Panc1 (cell line): ENCODE measurements at regions of chr17 and their contacts with region 1.

Region 1: DNA sequence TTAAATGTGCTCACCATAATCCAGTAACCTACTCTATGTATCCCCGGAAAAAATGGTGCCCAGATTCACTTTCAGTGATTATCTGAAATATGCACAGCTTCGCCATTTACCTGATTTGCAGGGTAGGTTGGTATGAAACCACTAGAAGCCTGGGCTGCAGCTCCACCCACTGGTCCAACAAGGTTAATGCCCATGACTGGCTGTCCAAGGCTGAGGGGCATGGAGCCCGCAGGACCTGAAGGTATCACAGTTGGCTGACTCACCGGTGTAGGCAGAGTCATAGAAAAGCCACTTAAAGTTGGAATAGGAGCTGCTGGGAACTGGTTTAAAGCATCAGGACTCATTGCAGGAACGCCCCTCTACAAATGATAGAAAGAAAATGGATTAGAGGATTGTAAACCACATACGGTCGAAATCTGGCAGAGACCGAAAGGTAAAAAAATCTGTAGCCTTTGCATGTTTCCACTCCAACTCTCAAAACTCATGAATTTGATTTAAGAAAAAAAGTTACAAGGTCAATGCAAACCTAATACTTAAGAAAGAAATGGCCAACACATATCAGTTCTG is 38.6 kb downstream of the SYNRG start:
- DNase-seq: peak; percentile 4
- ATAC-seq: peak; percentile 81
- H3K4me3 ChIP-seq: no peak overlapping the region
- H3K27ac ChIP-seq: no peak overlapping the region
- H3K4me1 ChIP-seq: no peaks in the 10 kb centered on the region
- H3K27me3 ChIP-seq: no peaks in the 10 kb centered on the region
- CTCF ChIP-seq: peak; percentile 52

Region 2: DNA sequence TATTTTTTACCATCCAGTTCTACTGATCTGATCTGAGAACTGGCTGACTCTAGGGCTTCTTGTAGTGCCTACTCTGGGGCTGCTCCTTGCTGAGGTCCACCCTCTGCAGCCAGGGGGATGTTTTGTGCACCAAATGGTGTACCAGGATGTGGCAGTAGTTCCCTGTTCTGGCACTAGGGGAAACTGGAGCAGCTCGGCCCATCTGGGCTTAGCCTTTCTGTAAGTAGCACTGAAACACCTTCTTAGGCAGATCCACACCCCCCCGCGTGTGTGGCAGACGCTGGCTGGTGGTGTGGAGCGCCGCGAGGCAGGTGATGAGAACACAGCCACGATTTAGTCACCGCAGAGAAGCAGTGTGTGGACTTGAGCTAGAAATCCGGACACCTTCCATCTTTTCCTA is 63.9 kb before region 1 on chr17:
- CTCF ChIA-PET with region 1: no interaction called
- POLR2A ChIA-PET with region 1: no interaction called
- in situ Hi-C with region 1: no loop called
- intact Hi-C with region 1: loop called (anchors 10 kb)
- DNase-seq: no peak
- ATAC-seq: peak; percentile 90
- H3K4me3 ChIP-seq: no peak overlapping the region
- H3K27ac ChIP-seq: no peak overlapping the region
- H3K4me1 ChIP-seq: no peaks in the 10 kb centered on the region
- H3K27me3 ChIP-seq: no peaks in the 10 kb centered on the region
- CTCF ChIP-seq: peak; percentile 55

Region 3: DNA sequence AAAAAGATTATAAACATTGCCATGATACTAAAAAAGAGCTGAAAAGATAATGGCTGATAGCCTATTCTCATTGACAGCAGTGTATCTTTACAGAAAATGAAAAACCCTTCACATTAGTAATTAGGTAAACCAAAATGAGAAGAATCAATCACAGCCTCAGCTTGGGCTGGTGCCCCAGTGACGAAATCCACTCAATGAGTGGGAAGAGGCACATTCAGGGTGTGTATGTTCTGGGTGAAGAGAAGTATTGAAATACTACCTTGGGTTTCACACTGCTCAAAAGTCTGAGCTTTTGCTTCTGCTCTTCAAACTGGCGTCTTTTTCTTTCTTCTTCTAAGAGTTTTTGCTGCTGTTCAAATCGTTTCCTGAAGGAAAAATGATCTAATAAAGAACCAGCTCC is 14.5 kb after region 1 on chr17:
- CTCF ChIA-PET with region 1: interaction called, 10 read pairs
- POLR2A ChIA-PET with region 1: no interaction called
- in situ Hi-C with region 1: no loop called
- intact Hi-C with region 1: no loop called
- DNase-seq: no peak
- ATAC-seq: no peak
- H3K4me3 ChIP-seq: no peak overlapping the region
- H3K27ac ChIP-seq: no peak overlapping the region
- H3K4me1 ChIP-seq: no peaks in the 10 kb centered on the region
- H3K27me3 ChIP-seq: no peaks in the 10 kb centered on the region
- CTCF ChIP-seq: no peak

Region 4: GRCh38 chr17:37605813-37606505 is 35.3 kb after region 1 on chr17:
- CTCF ChIA-PET with region 1: no interaction called
- POLR2A ChIA-PET with region 1: no interaction called
- in situ Hi-C with region 1: no loop called
- intact Hi-C with region 1: no loop called
- DNase-seq: no peak
- ATAC-seq: no peak
- H3K4me3 ChIP-seq: no peak overlapping the region
- H3K27ac ChIP-seq: no peak overlapping the region
- H3K4me1 ChIP-seq: peaks cover 6% of the 10 kb centered on the region
- H3K27me3 ChIP-seq: no peaks in the 10 kb centered on the region
- CTCF ChIP-seq: no peak

Region 5: GRCh38 chr17:37737081-37737480 is 166.5 kb after region 1 on chr17:
- CTCF ChIA-PET with region 1: interaction called, 10 read pairs
- POLR2A ChIA-PET with region 1: no interaction called
- in situ Hi-C with region 1: no loop called
- intact Hi-C with region 1: no loop called
- DNase-seq: no peak
- ATAC-seq: no peak
- H3K4me3 ChIP-seq: no peak overlapping the region
- H3K27ac ChIP-seq: no peak overlapping the region
- H3K4me1 ChIP-seq: no peaks in the 10 kb centered on the region
- H3K27me3 ChIP-seq: peaks cover 18% of the 10 kb centered on the region
- CTCF ChIP-seq: no peak